Colonic mucosa (tissue), 4 donors: ENCODE measurements at regions of chr14 and their contacts with region 1.

Region 1: DNA sequence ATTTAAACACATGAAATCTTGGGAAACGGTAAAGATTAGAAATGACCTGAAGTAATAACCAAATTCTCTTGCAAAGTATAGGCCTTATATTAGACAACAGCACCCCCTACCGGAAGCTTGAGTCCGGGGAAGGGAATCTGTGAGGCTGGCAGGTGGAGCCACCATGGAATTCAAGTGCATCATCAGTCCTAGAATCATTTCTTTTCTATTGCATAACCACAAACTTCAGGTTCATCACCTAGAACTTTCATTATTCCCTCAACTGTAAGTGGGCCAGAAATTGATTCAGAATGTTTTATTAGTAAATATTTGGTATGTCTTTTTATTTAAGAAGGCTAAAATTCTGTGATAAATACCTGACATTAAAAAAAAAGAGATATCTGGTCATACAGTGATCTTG is 48.5 kb downstream of the AP5M1 start:
- DNase-seq: peak; percentile 82
- H3K4me3 ChIP-seq: no peak overlapping the region
- H3K27ac ChIP-seq: no peak overlapping the region
- H3K4me1 ChIP-seq: no peaks in the 10 kb centered on the region
- H3K27me3 ChIP-seq: no peaks in the 10 kb centered on the region
- CTCF ChIP-seq: peak; percentile 94

Region 2: DNA sequence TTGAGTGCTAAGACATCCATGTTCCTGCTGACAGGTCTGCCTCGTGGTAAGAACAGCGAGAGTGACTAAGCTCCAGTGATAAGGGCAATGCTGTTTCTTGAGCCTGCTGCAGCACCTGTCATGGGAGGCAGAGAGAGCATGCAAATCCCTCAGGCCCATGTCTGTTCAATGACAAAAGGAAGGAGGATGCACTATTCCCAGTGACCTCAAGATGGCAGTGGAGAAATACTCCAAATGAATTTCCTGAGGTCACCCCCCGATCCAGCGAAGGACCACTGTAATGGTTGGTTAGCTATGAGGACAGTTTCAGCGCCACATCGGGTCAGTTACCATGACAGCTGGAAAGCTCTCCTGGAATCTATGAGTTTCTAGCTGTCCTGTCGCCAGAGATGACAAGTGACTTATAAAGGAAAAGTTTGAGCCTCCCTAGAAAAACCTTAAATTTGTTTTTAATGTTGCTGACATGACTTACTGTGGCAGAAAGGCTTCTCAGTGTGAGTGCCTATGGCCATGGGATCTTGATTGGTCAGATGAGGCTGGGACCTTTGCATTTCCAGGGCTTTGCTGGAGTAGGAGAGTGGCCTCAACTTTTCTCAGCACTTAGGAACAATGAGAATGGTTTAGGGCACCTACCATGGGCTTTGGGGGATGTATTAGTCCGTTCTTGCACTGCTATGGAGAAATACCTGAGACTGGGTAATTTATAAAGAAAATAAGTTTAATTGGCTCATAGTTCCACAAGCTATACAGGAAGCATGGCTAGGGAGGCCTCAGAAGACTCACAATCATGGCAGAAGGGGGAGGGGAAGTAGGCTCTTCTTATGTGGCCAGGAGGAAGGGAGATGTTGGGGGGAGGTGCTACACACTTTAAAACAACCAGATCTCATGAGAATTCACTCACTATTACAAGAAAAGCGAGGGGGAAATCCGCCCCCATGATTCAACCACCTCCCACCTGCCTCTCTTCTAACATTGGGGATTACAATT is 825.7 kb before region 1 on chr14:
- intact Hi-C with region 1: loop called (anchors 5 kb)
- DNase-seq: peak; percentile 48
- H3K4me3 ChIP-seq: no peak overlapping the region
- H3K27ac ChIP-seq: no peak overlapping the region
- H3K4me1 ChIP-seq: no peaks in the 10 kb centered on the region
- H3K27me3 ChIP-seq: no peaks in the 10 kb centered on the region
- CTCF ChIP-seq: peak; percentile 62